ENCODE measurements at regions of chr6 and their contacts with region 1.

Region 1: GRCh38 chr6:71509191-71510005 is 220.8 kb downstream of the OGFRL1 start:
- DNase-seq: peak in 1 of 5 donors; percentile 41
- H3K4me3 ChIP-seq: no peak overlapping the region
- H3K27ac ChIP-seq: peak overlapping the region in 1 of 2 donors; percentile 8
- H3K4me1 ChIP-seq: peaks cover 3 to 7% (median 3%) of the 10 kb centered on the region in 3 donors
- H3K27me3 ChIP-seq: no peaks in the 10 kb centered on the region
- CTCF ChIP-seq: no peak

Region 2: DNA sequence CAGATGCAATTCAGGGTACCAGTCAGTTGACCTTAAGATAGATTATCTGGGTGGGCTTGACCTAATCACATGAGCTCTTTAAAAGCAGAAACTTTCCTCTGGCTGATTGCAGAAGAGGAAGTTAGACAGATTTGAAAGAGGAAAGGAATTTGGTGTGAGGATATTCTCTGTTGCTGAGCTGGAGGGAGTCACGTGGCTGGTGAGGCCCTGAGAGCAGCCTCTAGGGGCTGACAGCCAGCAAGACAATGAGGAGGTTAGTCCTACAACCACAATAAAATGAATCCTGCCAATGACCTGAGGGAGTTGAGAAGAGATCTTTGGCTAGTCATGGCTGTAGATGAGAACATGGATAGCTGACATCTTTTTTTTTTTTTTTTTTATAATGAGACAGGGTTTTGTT is 465.5 kb before region 1 on chr6:
- intact Hi-C with region 1: no loop called
- DNase-seq: no peak
- H3K4me3 ChIP-seq: no peak overlapping the region
- H3K27ac ChIP-seq: no peak overlapping the region
- H3K4me1 ChIP-seq: no peaks in the 10 kb centered on the region
- H3K27me3 ChIP-seq: no peaks in the 10 kb centered on the region
- CTCF ChIP-seq: no peak

Region 3: DNA sequence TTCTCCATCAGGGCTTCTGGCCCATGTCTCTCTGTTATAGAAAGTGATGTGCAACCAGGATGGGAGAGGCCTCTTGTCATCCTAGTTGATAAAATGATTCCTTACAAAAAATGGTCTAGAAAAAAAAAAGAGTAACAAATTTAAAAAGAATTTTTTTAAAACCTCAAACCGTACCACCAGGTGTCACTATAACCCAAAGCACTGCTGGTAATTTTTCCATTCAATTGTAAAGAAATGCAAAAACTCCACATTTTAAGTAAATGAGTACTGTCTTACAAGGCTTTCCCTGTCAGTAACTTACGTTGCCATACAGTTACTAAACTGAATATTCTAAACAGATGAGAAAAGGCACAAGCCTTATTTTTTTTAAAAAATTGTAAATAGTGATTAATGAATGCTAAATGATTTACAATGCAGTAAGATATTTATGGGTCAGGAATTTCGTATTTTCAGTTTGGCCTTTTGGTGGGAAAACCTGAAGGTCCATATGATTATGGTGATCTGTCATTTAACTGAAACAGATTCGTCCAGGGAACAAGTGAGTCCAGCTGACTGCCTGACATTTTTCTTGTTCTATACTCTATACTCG is 125.4 kb before region 1 on chr6:
- intact Hi-C with region 1: loop called (anchors 10 kb)
- DNase-seq: peak in 2 of 5 donors; percentile 77 to 78
- H3K4me3 ChIP-seq: no peak overlapping the region
- H3K27ac ChIP-seq: peak overlapping the region in 1 of 2 donors; percentile 19
- H3K4me1 ChIP-seq: peaks cover 0 to 40% (median 8%) of the 10 kb centered on the region in 3 donors
- H3K27me3 ChIP-seq: no peaks in the 10 kb centered on the region
- CTCF ChIP-seq: peak; percentile 27

Measured in kidney (tissue), 22 donors.